ENCODE measurements at regions of chr7 and their contacts with region 1.

Region 1: GRCh38 chr7:5872326-5872725 is 8.3 kb upstream of the OCM start:
- DNase-seq: peak; percentile 1

Region 2: DNA sequence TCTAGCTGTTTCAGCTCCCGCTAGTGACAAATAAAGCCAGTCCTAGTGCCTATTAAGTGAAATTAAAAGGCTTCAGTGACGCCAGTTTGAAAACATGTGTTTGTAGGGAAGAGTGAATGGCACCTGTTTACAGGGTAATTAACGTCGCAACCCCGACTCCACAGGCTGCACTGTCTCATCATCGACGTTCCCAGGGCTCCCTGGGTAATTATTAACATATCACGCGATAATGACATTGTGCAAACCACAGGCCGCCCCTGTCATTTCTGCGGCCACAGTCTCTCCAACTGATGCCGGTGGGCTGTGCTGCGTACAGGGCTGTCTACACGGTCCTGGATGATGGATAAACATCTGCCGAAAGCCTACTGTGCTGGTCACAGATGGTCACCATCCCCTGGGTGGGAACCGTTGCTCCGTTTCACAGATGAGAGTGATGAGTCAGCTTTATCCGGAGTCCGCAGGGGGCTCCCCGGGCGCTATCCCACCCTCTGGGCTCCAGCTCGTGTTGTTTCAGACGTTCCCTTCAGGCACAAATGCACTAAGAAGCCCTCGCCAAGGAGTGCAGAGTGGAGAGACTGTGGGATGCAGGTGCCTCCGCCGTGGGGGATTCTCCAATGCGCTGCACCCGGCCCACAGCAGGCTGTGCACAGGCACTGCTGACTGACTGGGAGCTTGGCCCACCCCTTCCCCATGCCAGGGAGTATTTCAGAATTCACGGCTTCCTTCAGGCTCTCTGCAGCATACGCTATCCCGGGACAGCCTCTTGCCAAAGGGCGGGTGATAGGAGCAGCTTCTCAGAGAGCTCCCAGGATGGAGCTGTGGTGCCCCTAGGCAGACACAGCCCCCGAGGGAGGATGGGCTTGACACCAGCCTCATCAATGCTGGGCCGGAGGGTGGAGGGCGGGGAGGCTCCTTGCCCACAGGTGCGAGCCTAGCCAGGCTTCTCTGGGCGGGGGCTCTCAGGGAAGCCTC is 1682.0 kb before region 1 on chr7:
- intact Hi-C with region 1: loop called in 1 of 2 experiments (anchors 10 kb)
- DNase-seq: no peak

Region 3: DNA sequence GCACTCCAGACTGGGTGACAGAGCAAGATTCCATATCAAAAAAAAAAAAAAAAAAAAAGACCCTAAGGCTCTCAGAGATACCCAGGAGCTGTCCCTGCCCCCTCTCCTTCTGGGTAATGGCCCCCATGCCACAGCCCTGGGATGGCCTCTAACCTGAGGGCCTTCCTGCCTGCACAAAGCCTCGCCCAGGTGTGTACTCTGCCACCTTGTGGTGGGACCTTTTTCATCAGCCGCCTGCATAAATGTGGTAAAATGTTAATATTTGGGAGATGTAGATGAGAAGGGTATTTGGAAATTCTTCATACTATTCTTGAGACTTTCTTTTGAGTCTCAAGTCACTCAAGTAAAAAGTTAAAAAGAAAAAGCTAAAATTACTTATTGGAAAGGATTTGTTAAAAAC is 44.6 kb before region 1 on chr7:
- intact Hi-C with region 1: no loop called
- DNase-seq: no peak